GM13976 (cell line): ENCODE measurements at regions of chr7 and their contacts with region 1.

Region 1: DNA sequence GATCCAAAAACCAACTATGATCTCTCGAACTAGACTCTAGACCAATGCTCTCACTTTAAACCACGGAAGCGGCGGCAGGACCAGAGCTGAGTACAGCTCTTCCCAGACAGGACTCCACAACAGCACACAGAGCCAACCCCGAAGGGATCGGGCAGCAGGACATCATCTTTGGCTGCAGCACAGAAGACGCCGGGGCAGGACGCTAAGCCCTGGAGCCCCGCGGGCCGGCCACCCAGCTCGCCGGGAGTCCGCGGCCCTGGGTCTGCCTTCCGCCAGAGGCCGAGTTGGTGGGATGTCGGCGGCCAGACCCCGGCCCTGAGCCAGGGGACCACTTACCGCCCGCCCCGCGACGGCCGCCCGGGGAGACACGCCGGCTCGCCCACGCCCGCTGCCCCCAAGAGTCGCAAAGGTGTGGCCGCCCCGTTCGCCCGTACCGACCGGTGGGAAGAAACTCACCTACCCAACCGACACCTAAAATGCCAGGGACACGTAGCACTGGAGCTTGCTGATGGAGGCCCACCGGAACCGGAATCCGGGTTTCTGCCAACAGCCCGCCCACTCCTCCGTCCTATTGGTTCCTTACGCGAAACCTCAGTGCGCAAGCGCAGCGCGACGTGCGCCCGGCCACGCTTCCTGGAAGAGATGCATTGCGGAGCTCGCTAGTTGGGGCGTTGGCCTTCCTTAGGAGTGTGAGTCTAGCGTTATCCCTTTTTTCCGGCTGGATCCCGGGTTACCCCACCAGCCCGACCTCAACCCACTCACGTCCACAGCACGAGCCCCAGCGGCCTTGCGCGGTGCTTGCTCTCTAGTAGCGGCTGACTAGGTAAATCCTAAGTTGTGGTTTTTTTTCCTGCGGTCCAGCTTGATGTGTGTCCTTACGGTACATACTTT is at the start of gene SEC61G:
- DNase-seq: peak; percentile 96
- CTCF ChIP-seq: no peak

Region 2: GRCh38 chr7:55415173-55415778 is 656.3 kb after region 1 on chr7:
- in situ Hi-C with region 1: loop called (anchors 25 kb)
- DNase-seq: peak; percentile 84
- CTCF ChIP-seq: peak; percentile 60